Left ventricle myocardium superior (tissue), 1 donor: ENCODE measurements at regions of chr16 and their contacts with region 1.

Region 1: GRCh38 chr16:73179705-73180677 is 132.1 kb upstream of the ZFHX3 start:
- DNase-seq: peak; percentile 46
- ATAC-seq: peak; percentile 83

Region 2: GRCh38 chr16:72989579-72990551 is 190.1 kb before region 1 on chr16:
- intact Hi-C with region 1: no loop called
- DNase-seq: peak; percentile 72
- ATAC-seq: peak; percentile 72

Region 3: GRCh38 chr16:73047518-73048291 is 132.3 kb before region 1 on chr16 and contains the start of gene ZFHX3:
- intact Hi-C with region 1: loop called (anchors 10 kb)
- DNase-seq: peak; percentile 86
- ATAC-seq: peak; percentile 78
- total RNA-seq, gene ZFHX3: 8.1 TPM